Activated B cell treated with CpG ODN at 0.5 μM for 24 hours (primary cell): ENCODE measurements at regions of chr20 and their contacts with region 1.

Region 1: GRCh38 chr20:15673206-15673605 is 900.0 kb downstream of the KIF16B start:
- DNase-seq: no peak
- ATAC-seq: no peak
- H3K4me3 Mint-ChIP-seq: no peak overlapping the region
- H3K27ac Mint-ChIP-seq: no peak overlapping the region
- H3K4me1 Mint-ChIP-seq: no peaks in the 10 kb centered on the region
- H3K27me3 Mint-ChIP-seq: no peaks in the 10 kb centered on the region
- CTCF ChIP-seq: no peak

Region 2: DNA sequence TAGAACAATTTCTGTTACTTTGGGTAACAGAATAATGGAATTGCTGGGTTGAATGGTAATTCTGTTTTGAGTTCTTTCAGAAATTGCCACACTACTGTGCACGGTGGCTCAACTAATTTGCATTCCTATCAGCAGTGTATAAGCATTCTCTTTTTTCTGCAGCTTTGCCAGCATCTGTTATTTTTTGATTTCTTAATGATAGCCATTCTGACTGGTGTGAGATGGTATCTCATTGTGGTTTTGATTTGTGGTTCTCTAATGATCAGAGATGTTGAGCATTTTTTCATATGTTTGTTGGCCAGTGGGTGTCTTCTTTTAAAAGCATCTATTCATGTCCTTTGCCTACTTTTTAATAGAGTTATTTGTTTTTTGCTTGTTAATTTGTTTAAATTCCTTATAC is 53.2 kb after region 1 on chr20:
- CTCF ChIA-PET with region 1: no interaction called
- POLR2A ChIA-PET with region 1: no interaction called
- intact Hi-C with region 1: loop called (anchors 2 kb)
- DNase-seq: no peak
- ATAC-seq: no peak
- H3K4me3 Mint-ChIP-seq: no peak overlapping the region
- H3K27ac Mint-ChIP-seq: no peak overlapping the region
- H3K4me1 Mint-ChIP-seq: no peaks in the 10 kb centered on the region
- H3K27me3 Mint-ChIP-seq: no peaks in the 10 kb centered on the region
- CTCF ChIP-seq: no peak

Region 3: DNA sequence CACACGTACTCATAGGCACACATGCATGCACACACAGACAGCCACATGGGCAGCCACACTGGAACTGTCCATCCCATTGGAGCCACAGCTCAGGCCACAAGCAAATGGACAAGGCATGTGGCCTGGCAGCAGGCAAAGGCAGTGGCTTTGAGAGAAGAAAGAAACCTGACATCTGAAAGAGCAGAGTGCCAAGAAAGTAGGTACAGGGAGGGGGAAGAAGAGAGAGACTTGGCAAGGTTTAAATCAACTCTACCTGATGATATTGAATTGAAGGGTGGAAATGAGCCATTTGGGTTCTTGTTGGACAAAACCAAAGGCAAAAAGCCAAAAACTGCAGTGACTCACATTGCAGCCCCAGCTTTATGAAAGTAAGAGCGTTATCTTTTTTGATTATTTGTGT is 1696.3 kb after region 1 on chr20:
- CTCF ChIA-PET with region 1: no interaction called
- POLR2A ChIA-PET with region 1: no interaction called
- intact Hi-C with region 1: no loop called
- DNase-seq: no peak
- ATAC-seq: no peak
- H3K4me3 Mint-ChIP-seq: no peak overlapping the region
- H3K27ac Mint-ChIP-seq: no peak overlapping the region
- H3K4me1 Mint-ChIP-seq: no peaks in the 10 kb centered on the region
- H3K27me3 Mint-ChIP-seq: peaks cover 2% of the 10 kb centered on the region
- CTCF ChIP-seq: no peak